ENCODE measurements at regions of chr1 and their contacts with region 1.

Region 1: DNA sequence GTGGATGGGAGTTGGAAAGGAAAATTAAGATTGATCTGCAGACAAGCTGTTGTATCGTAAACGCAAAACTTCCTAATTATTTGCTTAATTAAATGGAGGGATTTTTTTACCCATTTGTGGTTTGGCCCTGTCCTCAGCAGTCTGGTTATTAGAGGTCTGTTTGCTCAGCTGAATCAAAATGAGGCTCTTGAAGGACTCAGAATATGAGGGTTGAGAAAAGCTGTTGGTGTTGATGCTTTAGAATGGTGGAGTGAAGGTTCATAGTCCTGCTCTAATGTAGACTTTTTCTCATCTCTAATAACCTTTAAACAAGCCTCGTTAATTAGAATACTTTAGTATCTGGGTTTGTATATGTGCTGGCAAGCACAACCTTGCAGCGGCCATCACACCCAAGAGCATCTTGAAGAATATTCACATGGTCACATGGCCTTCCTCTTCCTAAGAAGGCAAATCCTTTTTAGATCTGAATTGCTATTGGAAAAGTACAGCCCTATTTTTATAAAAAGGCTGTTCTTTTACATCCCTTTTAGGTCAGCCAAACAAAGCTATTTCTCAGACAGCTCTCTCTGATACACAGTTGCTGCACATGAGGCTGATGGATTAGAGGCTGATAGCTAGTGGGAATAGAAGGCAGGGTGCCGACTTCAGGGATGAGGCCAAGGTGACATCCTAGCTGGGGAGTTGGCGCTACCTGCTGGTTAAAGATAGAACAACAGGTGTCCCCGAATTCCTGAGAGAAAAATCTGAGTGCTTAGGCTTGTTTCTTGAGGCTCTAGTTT is 53.8 kb downstream of the MACF1 start:
- DNase-seq: peak; percentile 67 to 94
- H3K4me3 ChIP-seq: no peak overlapping the region
- CTCF ChIP-seq: peak in 2 of 3 donors; percentile 34 to 67
- POLR2A ChIP-seq: no peak

Region 2: DNA sequence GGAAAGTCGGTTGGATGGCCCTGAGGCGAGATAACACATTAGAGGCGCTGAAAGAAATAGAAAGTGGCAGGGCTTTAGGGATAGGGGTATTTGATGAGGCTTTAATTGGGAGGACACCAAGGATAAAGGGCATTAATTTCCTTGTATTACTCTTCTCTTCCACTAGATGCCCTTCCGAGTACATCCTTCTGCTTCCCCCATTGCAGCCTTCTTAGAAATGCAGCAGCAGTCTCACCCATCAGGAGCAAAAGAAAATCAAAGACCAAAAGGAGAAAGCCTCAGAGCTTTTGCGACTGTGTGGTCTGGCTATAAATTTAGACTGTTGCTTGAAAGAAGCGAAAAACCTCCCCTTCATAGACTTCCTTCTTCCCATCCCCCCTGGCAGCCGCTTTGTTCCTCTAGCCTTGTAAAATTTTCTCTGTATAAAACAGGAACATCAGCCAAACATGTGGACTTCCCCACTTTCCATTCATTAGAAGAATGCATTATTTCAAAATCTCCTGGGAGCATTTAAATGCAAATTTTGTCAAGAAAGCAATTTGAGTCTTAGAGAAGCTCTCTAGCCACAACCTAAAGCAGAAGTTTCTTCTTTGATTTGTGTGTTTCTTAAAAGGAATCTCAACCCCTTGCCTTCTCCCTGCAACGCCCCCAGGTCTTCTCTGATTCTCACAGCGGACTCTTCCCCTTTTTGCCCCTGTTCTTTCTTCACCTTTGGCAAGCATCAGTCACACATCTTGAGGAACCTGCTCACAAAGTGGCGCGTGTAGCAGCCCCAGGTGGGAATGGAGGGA is 155.6 kb before region 1 on chr1:
- intact Hi-C with region 1: loop called (anchors 2 kb)
- DNase-seq: peak; percentile 62 to 87
- H3K4me3 ChIP-seq: no peak overlapping the region
- CTCF ChIP-seq: peak in 1 of 3 donors; percentile 87
- POLR2A ChIP-seq: no peak

Region 3: GRCh38 chr1:39196244-39197215 is 61.8 kb before region 1 on chr1:
- intact Hi-C with region 1: loop called (anchors 10 kb)
- DNase-seq: no peak
- H3K4me3 ChIP-seq: no peak overlapping the region
- CTCF ChIP-seq: no peak
- POLR2A ChIP-seq: no peak

Region 4: DNA sequence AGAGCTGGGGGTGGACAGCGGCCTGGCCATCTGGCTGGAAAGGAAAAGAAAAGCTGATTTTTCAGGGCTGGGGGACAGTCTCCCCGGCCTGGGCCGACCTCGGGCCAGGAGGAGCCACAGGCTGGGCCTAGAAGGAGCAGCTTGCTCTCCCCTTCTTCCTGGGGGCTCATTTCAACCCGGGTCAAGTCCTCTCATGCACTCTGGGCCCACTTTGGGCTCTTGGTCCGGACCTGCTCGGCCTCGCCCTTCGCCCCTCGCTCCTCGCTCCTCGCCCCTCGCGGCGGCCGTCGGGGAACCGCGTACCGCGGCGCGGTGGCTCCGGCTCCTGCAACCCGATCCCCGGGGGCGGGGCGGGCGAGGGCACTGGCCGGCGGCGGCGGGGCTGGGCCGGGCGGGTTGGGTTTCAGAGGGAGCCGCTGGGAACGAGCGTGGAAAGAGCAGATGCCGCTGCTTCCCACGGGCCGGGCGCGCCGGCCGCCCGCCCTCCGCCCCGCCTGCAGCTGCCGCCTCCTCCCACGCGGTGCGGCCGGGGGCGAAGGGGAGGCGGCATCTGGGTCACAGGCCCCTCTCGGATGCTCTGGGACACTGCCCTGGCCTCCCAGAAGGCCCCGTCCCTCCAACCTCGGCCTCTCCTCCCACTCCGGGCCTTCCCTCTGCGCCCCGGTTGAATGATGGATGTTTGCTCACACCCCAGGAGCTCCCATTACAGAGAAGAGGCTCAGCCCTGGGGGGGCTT is 374.5 kb after region 1 on chr1:
- intact Hi-C with region 1: no loop called
- DNase-seq: peak in 1 of 2 donors; percentile 89
- H3K4me3 ChIP-seq: no peak overlapping the region
- CTCF ChIP-seq: no peak
- POLR2A ChIP-seq: no peak

Region 5: GRCh38 chr1:40143891-40144575 is 885.7 kb after region 1 on chr1:
- intact Hi-C with region 1: no loop called
- DNase-seq: peak in 1 of 2 donors; percentile 52
- H3K4me3 ChIP-seq: no peak overlapping the region
- CTCF ChIP-seq: peak in 1 of 3 donors; percentile 11
- POLR2A ChIP-seq: no peak

Measured in lower leg skin (tissue), 4 donors.